ENCODE measurements at regions of chr14 and their contacts with region 1.

Region 1: GRCh38 chr14:25049568-25050268 is at the start of gene STXBP6:
- DNase-seq: peak; percentile 76 to 89 (median 84)
- ATAC-seq: peak; percentile 39 to 92 (median 84)
- H3K4me3 ChIP-seq: peak within 1 kb of the TSS; percentile 65 to 90 (median 76)
- H3K27ac ChIP-seq: peak within 1 kb of the TSS; percentile 56 to 93 (median 85)
- H3K4me1 ChIP-seq: peaks cover 4 to 46% (median 13%) of the 10 kb centered on the region in 12 donors
- H3K27me3 ChIP-seq: peaks cover 0 to 47% (median 0%) of the 10 kb centered on the region in 9 donors
- CTCF ChIP-seq: no peak
- POLR2A ChIP-seq: peak in 1 of 2 donors; percentile 55
- total RNA-seq, gene STXBP6: 12.5 to 30.9 (median 22.5) TPM

Region 2: GRCh38 chr14:24734878-24735500 is 314.7 kb before region 1 on chr14:
- intact Hi-C with region 1: loop called in 9 of 10 experiments (anchors 5 to 10 kb)
- DNase-seq: peak in 3 of 5 donors; percentile 30 to 44 (median 39)
- ATAC-seq: peak in 3 of 4 donors; percentile 61 to 72 (median 71)
- H3K4me3 ChIP-seq: no peak overlapping the region
- H3K27ac ChIP-seq: no peak overlapping the region
- H3K4me1 ChIP-seq: no peaks in the 10 kb centered on the region
- H3K27me3 ChIP-seq: no peaks in the 10 kb centered on the region
- CTCF ChIP-seq: peak; percentile 65 to 92 (median 82)
- POLR2A ChIP-seq: no peak

Region 3: DNA sequence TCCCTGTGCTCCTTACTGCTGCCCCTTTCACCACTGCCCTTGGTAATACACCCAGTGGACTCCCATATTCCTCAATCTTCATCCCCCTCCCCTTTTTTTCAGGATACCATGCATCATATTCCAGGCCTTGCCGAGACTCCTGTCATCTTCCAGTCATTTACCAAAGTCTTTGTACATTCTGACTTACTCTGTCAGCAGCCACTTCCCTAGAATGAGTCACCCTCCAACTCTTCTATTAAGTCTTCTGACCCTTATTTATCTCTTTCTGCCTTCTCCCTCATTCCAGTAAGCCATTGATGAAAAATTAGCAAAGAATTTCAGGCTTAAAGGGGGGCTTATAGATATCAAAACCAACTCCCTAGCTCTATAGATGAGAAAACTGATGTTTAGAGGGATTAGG is 127.8 kb before region 1 on chr14:
- intact Hi-C with region 1: loop called in 1 of 10 experiments (anchors 10 kb)
- DNase-seq: no peak
- ATAC-seq: peak in 2 of 4 donors; percentile 38 to 47
- H3K4me3 ChIP-seq: no peak overlapping the region
- H3K27ac ChIP-seq: peak overlapping the region in 3 of 12 donors; percentile 20 to 34 (median 21)
- H3K4me1 ChIP-seq: peaks cover 0 to 65% (median 10%) of the 10 kb centered on the region in 12 donors
- H3K27me3 ChIP-seq: no peaks in the 10 kb centered on the region
- CTCF ChIP-seq: no peak
- POLR2A ChIP-seq: no peak

Region 4: DNA sequence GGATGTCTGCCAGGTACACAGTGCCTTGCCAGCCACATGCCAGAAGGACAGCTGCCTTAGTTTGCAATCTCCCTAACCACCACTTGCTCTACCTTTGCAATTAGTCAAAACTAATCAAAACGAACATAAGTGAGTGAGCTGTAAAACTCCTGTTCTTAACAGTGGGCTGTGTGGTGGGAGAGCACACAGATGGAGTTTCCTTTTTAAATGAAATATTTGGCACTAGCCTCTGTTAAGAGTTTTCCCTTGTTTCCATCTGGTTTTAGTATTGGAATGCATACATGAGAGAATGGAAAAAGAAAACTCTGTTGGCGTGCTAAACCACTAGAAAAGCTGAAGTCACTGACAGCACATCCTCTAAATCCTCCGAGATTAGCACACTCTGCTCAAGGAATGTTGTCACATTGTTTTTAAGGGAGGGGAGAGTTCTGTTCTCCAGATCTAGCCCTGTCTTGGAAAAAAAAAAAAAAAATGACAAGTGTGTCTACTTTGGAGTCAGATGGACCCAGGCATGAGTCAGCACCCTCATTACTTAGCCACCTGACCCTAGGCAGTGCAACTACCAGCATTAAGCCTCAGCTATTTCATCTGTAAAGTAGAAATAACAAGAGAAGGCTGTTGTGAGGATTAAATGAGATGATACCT is 83.7 kb before region 1 on chr14:
- intact Hi-C with region 1: loop called in 2 of 10 experiments (anchors 5 to 10 kb)
- DNase-seq: peak in 3 of 5 donors; percentile 31 to 49 (median 48)
- ATAC-seq: peak; percentile 76 to 91 (median 86)
- H3K4me3 ChIP-seq: peak overlapping the region in 2 of 12 donors; percentile 4 to 10
- H3K27ac ChIP-seq: peak overlapping the region in 11 of 12 donors; percentile 26 to 84 (median 61)
- H3K4me1 ChIP-seq: peaks cover 0 to 64% (median 21%) of the 10 kb centered on the region in 12 donors
- H3K27me3 ChIP-seq: no peaks in the 10 kb centered on the region
- CTCF ChIP-seq: no peak
- POLR2A ChIP-seq: no peak

Region 5: DNA sequence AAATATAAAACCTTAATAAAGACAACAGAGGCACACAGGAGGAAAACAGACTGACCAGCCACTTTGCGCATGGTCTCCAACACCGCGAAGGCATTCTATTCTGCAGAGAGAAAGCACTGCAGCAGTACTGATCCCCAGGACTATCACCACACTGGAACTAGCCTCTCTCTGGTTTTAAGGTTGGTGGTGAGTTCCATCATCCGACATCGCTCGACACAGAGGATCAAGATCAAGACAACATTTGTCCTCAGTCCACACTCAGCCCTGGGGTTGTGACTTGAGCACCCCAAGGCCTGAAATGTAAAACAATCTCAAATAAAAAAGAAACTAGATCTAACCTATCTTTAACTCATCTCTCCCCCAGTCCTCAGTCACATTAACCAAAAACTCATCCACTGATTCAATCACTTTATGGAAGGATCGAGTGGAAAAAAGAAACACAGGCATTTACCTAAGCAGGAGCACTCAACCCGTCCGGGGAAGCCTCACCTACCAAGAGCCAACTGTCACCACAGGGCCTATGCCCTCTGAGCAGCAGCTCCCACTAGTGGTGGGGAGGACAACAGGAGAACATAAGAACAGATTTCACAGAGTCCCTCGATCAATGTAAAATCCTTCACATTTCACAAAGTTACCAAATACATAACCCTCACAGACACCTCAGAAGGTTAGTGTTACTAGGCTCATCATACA is 17.5 kb before region 1 on chr14:
- intact Hi-C with region 1: no loop called
- DNase-seq: no peak
- ATAC-seq: peak in 1 of 4 donors; percentile 15
- H3K4me3 ChIP-seq: no peak overlapping the region
- H3K27ac ChIP-seq: no peak overlapping the region
- H3K4me1 ChIP-seq: peaks cover 0 to 36% (median 4%) of the 10 kb centered on the region in 12 donors
- H3K27me3 ChIP-seq: no peaks in the 10 kb centered on the region
- CTCF ChIP-seq: peak in 3 of 12 donors; percentile 16 to 24 (median 21)
- POLR2A ChIP-seq: no peak

Region 6: DNA sequence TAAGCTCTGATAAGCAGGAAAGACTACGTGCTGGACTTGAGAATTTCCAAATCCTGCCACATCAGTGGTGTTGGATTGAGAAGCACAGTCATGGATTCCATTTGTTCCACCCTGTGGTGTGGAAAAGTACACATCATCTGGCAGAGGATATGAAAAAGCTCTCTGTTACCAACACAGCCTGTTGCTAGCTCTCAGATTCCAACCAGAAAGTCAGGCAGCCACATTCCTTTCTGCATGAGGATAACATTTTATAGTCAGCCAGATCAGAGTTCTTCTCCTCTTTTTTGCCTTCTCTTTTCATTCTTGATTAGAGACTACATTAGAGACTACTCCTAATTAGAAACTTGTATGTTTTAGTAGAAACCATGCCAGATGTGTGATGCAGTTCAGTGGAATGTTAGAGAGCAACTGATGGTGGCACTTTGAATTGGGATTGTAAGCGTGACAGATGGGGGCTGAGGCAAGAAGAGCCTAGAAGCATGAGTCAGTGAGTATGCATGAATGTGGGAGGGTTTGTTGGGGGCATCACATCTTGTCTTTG is 61.4 kb after region 1 on chr14:
- intact Hi-C with region 1: loop called in 1 of 10 experiments (anchors 5 kb)
- DNase-seq: peak in 4 of 5 donors; percentile 34 to 39 (median 36)
- ATAC-seq: peak; percentile 96 to 99 (median 99)
- H3K4me3 ChIP-seq: peak overlapping the region in 7 of 12 donors; percentile 15 to 40 (median 25)
- H3K27ac ChIP-seq: peak overlapping the region; percentile 29 to 82 (median 67)
- H3K4me1 ChIP-seq: peaks cover 0 to 25% (median 13%) of the 10 kb centered on the region in 12 donors
- H3K27me3 ChIP-seq: no peaks in the 10 kb centered on the region
- CTCF ChIP-seq: no peak
- POLR2A ChIP-seq: no peak

Region 7: DNA sequence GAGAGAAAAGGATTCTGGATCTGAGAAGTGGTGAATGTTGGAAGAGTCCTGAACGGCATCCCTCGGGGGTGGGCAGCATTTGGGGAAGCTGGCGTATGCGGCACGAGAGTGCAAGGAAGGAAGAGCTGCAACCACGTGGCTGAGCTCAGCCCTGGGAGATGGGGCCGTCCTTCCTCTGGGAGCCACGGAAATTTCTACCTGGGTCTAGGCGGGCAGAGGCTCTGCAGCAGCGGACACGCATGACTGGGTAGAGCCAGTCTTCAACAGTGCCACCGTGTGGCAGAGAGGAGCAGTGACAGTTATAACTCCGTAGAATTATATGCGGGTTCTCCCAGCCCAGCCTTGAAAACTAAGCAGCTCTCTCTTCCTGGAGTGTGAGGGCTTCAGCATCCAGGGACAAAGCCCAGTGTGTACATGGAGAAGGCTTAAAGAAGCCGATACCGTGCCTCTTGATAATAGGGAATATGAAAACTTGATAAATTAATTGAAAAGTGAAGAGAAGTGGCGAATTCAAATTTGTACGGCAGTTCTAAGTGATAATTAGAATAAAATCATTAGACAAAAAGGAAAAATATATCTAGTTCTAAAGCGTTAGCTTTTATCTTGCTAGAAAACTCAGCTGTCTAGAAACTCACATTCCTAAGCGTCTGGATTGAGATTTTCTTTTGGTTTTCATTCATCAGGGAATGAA is 83.2 kb after region 1 on chr14:
- intact Hi-C with region 1: loop called in 9 of 10 experiments (anchors 2 to 10 kb)
- DNase-seq: peak; percentile 53 to 76 (median 69)
- ATAC-seq: peak; percentile 90 to 97 (median 96)
- H3K4me3 ChIP-seq: peak overlapping the region in 1 of 12 donors; percentile 16
- H3K27ac ChIP-seq: no peak overlapping the region
- H3K4me1 ChIP-seq: peaks cover 0 to 6% (median 2%) of the 10 kb centered on the region in 12 donors
- H3K27me3 ChIP-seq: peaks cover 0 to 47% (median 3%) of the 10 kb centered on the region in 9 donors
- CTCF ChIP-seq: peak; percentile 66 to 94 (median 87)
- POLR2A ChIP-seq: no peak

Measured in heart left ventricle (tissue), 16 donors.